Endothelial cell of umbilical vein (primary cell): ENCODE measurements at regions of chrX and their contacts with region 1.

Region 1: GRCh38 chrX:73855546-73855945 is 292.5 kb downstream of the CHIC1 start:
- DNase-seq: peak; percentile 62
- H3K4me3 ChIP-seq: no peak overlapping the region
- H3K27ac ChIP-seq: no peak overlapping the region
- H3K4me1 ChIP-seq: peaks cover 5% of the 10 kb centered on the region
- H3K27me3 ChIP-seq: no peaks in the 10 kb centered on the region
- CTCF ChIP-seq: peak; percentile 42 to 60
- POLR2A ChIP-seq: no peak

Region 2: GRCh38 chrX:73916931-73917667 is 61.6 kb after region 1 on chrX:
- CTCF ChIA-PET with region 1: interaction called, 5 read pairs
- POLR2A ChIA-PET with region 1: no interaction called
- dilution Hi-C with region 1: no loop called
- intact Hi-C with region 1: loop called (anchors 1 kb)
- DNase-seq: peak; percentile 90
- H3K4me3 ChIP-seq: no peak overlapping the region
- H3K27ac ChIP-seq: peak overlapping the region; percentile 95
- H3K4me1 ChIP-seq: peaks cover 45% of the 10 kb centered on the region
- H3K27me3 ChIP-seq: no peaks in the 10 kb centered on the region
- CTCF ChIP-seq: no peak
- POLR2A ChIP-seq: peak; percentile 41

Region 3: DNA sequence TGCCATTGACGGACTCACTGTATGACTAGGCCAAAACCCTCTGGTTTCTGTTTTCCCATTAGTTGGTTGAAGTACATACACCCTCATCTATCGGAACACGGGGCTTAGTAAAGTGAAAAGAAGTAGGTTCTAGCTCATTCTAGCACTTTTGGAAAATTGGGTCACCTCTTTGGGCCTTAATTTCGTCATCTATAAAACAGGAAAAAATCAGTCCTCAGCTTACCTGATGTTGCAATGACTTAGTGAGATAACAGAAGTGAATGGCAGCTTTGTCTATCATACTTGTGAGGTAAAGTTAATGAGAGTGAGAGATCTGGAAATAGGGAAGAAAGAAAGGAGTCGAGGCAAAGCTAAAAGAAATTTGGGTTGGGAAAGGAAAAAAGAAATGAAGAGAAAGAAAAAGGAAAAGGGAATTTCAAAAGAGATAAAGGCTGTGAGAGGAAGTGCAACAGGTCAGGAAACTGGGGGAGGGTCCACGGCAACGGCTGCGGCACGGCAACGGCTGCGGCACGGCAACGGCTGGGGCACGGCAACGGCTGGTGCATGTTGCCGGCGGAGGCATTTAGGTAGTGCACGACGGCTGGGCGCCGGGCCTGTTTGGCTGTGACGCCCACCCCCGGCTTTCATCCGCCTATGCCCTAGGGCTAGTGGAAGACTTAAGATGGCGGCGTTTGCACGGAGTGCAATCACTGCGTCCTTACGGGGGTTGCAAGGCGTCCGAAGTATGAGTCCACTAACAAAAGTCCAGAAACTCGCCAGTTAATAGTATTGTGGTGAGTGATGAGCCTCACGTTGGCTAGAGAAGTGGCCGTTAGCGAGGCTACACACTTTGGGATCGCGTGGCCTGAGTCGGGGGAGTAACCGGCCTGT is 88.4 kb after region 1 on chrX:
- CTCF ChIA-PET with region 1: no interaction called
- POLR2A ChIA-PET with region 1: no interaction called
- dilution Hi-C with region 1: no loop called
- intact Hi-C with region 1: loop called (anchors 5 kb)
- DNase-seq: peak; percentile 85
- H3K4me3 ChIP-seq: peak overlapping the region; percentile 87 to 99 (median 89)
- H3K27ac ChIP-seq: peak overlapping the region; percentile 98
- H3K4me1 ChIP-seq: peaks cover 11% of the 10 kb centered on the region
- H3K27me3 ChIP-seq: no peaks in the 10 kb centered on the region
- CTCF ChIP-seq: no peak
- POLR2A ChIP-seq: peak; percentile 77

Region 4: DNA sequence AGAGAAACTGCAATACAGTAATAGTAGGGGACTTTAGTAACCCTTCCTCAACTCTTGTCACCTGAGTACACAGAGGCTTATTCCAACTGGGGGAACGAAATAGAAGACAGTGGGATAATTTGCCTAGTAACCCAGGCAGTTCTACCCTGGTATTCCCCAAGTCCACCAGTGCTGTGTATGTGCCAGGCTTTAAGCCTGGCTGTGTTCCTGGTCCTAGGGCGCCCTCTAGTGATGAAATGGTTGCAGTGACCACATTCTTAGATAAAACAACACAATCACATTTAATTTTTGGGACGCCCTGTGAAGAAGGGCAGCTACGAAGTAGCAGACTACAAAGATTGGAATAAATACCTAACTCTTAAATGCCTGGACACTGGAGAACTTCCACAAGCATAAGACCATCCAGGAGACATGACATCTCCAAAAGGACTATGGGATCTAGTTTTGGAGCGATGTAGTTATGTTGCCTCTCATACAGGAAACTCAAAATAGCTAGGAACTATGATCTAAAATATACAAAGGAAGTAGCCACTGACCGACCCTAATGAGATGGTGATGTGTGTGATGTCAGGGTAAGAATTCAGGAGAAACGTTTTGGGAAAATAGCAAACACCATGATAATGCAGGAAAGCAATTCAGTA is 160.0 kb after region 1 on chrX:
- CTCF ChIA-PET with region 1: interaction called, 36 read pairs
- POLR2A ChIA-PET with region 1: no interaction called
- dilution Hi-C with region 1: no loop called
- intact Hi-C with region 1: loop called (anchors 1 kb)
- DNase-seq: peak; percentile 70
- H3K4me3 ChIP-seq: no peak overlapping the region
- H3K27ac ChIP-seq: no peak overlapping the region
- H3K4me1 ChIP-seq: no peaks in the 10 kb centered on the region
- H3K27me3 ChIP-seq: no peaks in the 10 kb centered on the region
- CTCF ChIP-seq: peak; percentile 54
- POLR2A ChIP-seq: no peak

Region 5: DNA sequence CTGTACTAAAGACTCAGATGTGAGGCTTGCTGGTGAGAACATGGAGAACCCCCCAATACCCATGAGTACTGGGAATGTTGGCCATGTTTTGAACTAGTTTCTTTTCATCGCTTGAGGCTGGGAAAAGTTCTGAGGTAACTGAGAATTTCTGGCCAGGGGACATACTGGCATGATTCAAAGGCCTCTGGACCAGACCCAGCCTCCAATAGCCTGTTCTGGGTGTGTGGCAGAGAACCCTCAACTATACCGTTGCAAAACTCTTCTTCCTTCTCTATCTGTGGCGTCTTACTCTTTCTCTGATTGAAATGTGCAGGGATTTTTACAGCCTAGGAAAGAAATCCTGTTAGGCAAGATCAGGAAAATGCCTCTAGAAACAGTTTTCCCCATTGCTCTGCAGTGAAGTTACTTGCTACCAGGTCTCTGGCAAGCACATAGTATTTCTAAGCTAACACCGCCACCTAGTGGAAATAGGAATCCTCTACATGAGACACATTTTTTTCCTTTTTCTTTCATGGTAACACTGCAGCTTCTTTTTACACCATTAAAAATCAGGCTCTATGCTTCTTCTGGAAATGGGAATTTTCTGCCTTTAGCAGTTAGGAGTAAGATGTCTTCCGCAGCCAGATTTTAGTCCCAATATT is 277.7 kb after region 1 on chrX:
- CTCF ChIA-PET with region 1: interaction called, 27 read pairs
- POLR2A ChIA-PET with region 1: no interaction called
- dilution Hi-C with region 1: no loop called
- intact Hi-C with region 1: loop called (anchors 1 kb)
- DNase-seq: peak; percentile 39
- H3K4me3 ChIP-seq: no peak overlapping the region
- H3K27ac ChIP-seq: no peak overlapping the region
- H3K4me1 ChIP-seq: no peaks in the 10 kb centered on the region
- H3K27me3 ChIP-seq: no peaks in the 10 kb centered on the region
- CTCF ChIP-seq: peak; percentile 23 to 34
- POLR2A ChIP-seq: no peak

Region 6: GRCh38 chrX:74343343-74344279 is 488.1 kb after region 1 on chrX:
- CTCF ChIA-PET with region 1: interaction called, 20 read pairs
- POLR2A ChIA-PET with region 1: no interaction called
- dilution Hi-C with region 1: no loop called
- intact Hi-C with region 1: loop called (anchors 1 kb)
- DNase-seq: peak; percentile 90
- H3K4me3 ChIP-seq: no peak overlapping the region
- H3K27ac ChIP-seq: no peak overlapping the region
- H3K4me1 ChIP-seq: no peaks in the 10 kb centered on the region
- H3K27me3 ChIP-seq: no peaks in the 10 kb centered on the region
- CTCF ChIP-seq: peak; percentile 24 to 35
- POLR2A ChIP-seq: no peak

Region 7: DNA sequence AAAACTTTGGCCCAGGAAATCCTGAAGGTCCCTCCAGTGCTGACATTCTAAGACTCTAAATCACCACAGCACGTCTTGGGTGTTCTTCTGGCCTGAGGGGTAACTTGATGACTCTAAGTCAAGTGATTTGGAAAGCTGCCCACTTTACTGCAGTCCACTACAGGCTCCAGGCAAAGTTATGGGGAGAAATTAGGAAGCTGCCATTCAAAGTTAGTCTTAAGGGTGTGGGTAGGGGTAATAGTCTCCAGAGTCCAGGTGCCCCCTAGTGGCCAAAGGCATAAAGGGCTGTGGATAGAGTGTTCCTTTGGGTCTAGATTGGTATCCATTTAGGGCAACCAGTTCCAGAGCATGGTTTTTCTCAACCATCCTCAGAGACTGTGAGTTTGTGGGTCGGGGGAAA is 527.1 kb after region 1 on chrX:
- CTCF ChIA-PET with region 1: interaction called, 3 read pairs
- POLR2A ChIA-PET with region 1: no interaction called
- dilution Hi-C with region 1: no loop called
- intact Hi-C with region 1: loop called (anchors 5 kb)
- DNase-seq: peak; percentile 34
- H3K4me3 ChIP-seq: no peak overlapping the region
- H3K27ac ChIP-seq: no peak overlapping the region
- H3K4me1 ChIP-seq: no peaks in the 10 kb centered on the region
- H3K27me3 ChIP-seq: no peaks in the 10 kb centered on the region
- CTCF ChIP-seq: peak; percentile 55 to 73
- POLR2A ChIP-seq: no peak